Endothelial cell of umbilical vein (primary cell): ENCODE measurements at regions of chr6 and their contacts with region 1.

Region 1: GRCh38 chr6:70686548-70687133 is 19.0 kb downstream of the SMAP1 start:
- DNase-seq: peak; percentile 59
- H3K4me3 ChIP-seq: no peak overlapping the region
- H3K27ac ChIP-seq: no peak overlapping the region
- H3K4me1 ChIP-seq: no peaks in the 10 kb centered on the region
- H3K27me3 ChIP-seq: no peaks in the 10 kb centered on the region
- CTCF ChIP-seq: peak; percentile 38 to 41
- POLR2A ChIP-seq: no peak

Region 2: DNA sequence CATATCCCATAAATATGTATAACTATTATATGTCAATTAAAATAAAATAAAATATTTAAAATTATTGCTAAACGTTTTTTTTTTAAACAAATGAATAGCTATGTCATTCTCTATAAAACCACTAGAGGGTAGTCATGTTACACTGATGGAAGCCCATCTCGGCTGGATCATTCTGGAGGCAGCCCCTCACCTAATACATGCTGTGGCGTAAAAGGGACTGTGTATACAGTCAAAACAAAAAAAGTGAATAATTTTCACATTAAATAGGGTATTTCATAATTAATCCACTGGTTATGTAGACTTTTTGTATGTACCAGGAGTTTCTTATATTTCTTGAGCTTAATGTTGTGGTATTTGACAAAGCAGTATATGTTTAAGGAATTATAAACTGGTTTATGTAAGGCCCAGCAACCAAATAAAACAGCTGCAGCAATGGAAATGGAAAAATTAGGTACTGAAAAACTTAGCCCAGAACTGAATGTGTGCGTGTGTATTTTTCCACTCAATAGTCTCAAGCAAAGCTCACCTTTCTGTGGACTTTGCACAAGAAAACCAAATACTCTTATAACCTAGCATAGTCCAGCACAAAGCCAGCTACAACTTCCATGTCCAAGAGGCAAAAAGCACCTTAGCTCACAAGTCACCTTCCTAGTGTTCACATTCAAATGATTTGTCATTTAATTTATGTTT is 465.5 kb before region 1 on chr6:
- CTCF ChIA-PET with region 1: interaction called, 18 read pairs
- POLR2A ChIA-PET with region 1: no interaction called
- dilution Hi-C with region 1: no loop called
- intact Hi-C with region 1: loop called (anchors 5 kb)
- DNase-seq: peak; percentile 32
- H3K4me3 ChIP-seq: no peak overlapping the region
- H3K27ac ChIP-seq: no peak overlapping the region
- H3K4me1 ChIP-seq: no peaks in the 10 kb centered on the region
- H3K27me3 ChIP-seq: no peaks in the 10 kb centered on the region
- CTCF ChIP-seq: peak; percentile 32 to 35
- POLR2A ChIP-seq: no peak

Region 3: GRCh38 chr6:70289299-70289698 is 397.3 kb before region 1 on chr6:
- CTCF ChIA-PET with region 1: no interaction called
- POLR2A ChIA-PET with region 1: no interaction called
- dilution Hi-C with region 1: no loop called
- intact Hi-C with region 1: no loop called
- DNase-seq: no peak
- H3K4me3 ChIP-seq: no peak overlapping the region
- H3K27ac ChIP-seq: no peak overlapping the region
- H3K4me1 ChIP-seq: no peaks in the 10 kb centered on the region
- H3K27me3 ChIP-seq: peaks cover 0 to 2% of the 10 kb centered on the region in 2 experiments
- CTCF ChIP-seq: no peak
- POLR2A ChIP-seq: no peak

Region 4: GRCh38 chr6:70369332-70369950 is 317.2 kb before region 1 on chr6:
- CTCF ChIA-PET with region 1: interaction called, 39 read pairs
- POLR2A ChIA-PET with region 1: no interaction called
- dilution Hi-C with region 1: no loop called
- intact Hi-C with region 1: loop called (anchors 1 kb)
- DNase-seq: peak; percentile 68
- H3K4me3 ChIP-seq: no peak overlapping the region
- H3K27ac ChIP-seq: no peak overlapping the region
- H3K4me1 ChIP-seq: no peaks in the 10 kb centered on the region
- H3K27me3 ChIP-seq: peaks cover 7 to 24% of the 10 kb centered on the region in 2 experiments
- CTCF ChIP-seq: peak; percentile 91 to 92
- POLR2A ChIP-seq: no peak

Region 5: DNA sequence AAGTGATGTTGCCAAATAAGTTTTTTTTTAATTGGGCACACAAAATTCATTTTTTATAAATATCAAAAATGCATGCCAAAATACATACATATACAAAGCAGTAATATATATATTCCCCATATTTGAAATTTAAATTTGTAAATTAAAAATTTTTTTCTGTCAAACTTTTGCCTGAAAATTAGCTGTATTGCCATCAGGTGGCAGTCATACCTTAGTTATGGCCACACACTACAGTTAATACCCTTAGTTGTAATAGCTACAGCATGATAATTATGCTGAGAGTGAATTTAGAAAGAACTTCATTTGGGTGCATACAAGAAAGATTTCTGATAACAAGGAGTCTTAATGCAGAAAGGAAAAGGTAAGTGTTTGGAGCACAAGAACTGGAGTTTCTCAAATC is 166.1 kb before region 1 on chr6:
- CTCF ChIA-PET with region 1: interaction called, 96 read pairs
- POLR2A ChIA-PET with region 1: no interaction called
- dilution Hi-C with region 1: no loop called
- intact Hi-C with region 1: loop called (anchors 1 kb)
- DNase-seq: peak; percentile 13
- H3K4me3 ChIP-seq: no peak overlapping the region
- H3K27ac ChIP-seq: no peak overlapping the region
- H3K4me1 ChIP-seq: no peaks in the 10 kb centered on the region
- H3K27me3 ChIP-seq: no peaks in the 10 kb centered on the region
- CTCF ChIP-seq: peak in 1 of 2 donors; percentile 4
- POLR2A ChIP-seq: no peak

Region 6: GRCh38 chr6:70667711-70668498 is 18.7 kb before region 1 on chr6 and contains the start of gene SMAP1:
- CTCF ChIA-PET with region 1: interaction called, 39 read pairs
- POLR2A ChIA-PET with region 1: no interaction called
- dilution Hi-C with region 1: no loop called
- intact Hi-C with region 1: loop called (anchors 2 kb)
- DNase-seq: peak; percentile 91
- H3K4me3 ChIP-seq: peak within 1 kb of the TSS; percentile 77 to 93 (median 89)
- H3K27ac ChIP-seq: peak within 1 kb of the TSS; percentile 75
- H3K4me1 ChIP-seq: peaks cover 16% of the 10 kb centered on the region
- H3K27me3 ChIP-seq: no peaks in the 10 kb centered on the region
- CTCF ChIP-seq: peak in 1 of 2 donors; percentile 1
- POLR2A ChIP-seq: peak; percentile 19
- total RNA-seq, gene SMAP1: 24.6 and 24.7 TPM in 2 replicates

Region 7: DNA sequence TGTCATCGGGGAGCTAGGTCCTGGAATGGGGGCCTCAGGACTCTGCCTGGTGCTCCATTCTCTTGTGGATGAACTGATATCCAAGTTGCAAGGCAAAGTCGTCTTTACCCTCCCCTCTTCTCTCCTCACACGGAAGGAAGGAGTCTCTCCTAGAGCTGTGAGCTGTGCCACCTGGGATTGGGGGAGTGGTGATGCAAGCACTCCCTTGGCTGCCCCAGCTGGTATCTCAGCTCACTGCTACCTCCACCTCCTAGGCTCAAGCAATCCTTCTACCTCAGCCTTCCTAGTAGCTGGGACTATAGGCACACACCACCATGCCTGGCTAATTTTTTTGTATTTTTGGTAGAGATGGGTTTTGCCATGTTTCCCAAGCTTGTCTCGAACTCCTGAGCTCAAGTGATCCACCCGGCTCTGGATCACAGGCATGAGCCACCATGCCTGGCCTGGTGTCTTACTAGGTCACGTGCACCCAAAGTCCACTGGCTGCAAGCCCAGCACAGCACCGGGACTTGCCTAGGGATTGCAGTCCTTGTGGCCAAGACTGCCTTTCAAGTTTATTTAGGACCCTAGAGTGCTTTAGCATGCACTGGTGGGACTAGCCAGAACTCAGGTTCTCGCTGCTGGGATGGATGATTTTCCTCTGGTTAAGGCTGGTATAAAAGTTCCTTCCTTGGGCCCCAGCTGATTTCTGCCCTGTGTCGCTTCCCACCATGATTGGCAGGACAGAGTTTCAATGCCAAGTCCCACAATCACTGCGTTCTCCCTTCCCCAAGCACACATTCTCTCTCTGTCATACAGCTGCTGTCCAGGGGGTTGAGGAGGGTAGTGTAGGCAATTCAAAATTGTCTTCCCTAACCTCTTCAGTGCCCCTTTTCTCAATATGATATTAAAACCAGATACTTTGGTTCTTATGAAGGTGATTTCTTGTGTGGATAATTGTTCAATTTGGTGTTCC is 14.6 kb after region 1 on chr6:
- CTCF ChIA-PET with region 1: interaction called, 19 read pairs
- POLR2A ChIA-PET with region 1: no interaction called
- dilution Hi-C with region 1: no loop called
- intact Hi-C with region 1: no loop called
- DNase-seq: no peak
- H3K4me3 ChIP-seq: no peak overlapping the region
- H3K27ac ChIP-seq: no peak overlapping the region
- H3K4me1 ChIP-seq: no peaks in the 10 kb centered on the region
- H3K27me3 ChIP-seq: no peaks in the 10 kb centered on the region
- CTCF ChIP-seq: no peak
- POLR2A ChIP-seq: no peak